K562 (cell line): ENCODE measurements at regions of chr17 and their contacts with region 1.

Region 1: DNA sequence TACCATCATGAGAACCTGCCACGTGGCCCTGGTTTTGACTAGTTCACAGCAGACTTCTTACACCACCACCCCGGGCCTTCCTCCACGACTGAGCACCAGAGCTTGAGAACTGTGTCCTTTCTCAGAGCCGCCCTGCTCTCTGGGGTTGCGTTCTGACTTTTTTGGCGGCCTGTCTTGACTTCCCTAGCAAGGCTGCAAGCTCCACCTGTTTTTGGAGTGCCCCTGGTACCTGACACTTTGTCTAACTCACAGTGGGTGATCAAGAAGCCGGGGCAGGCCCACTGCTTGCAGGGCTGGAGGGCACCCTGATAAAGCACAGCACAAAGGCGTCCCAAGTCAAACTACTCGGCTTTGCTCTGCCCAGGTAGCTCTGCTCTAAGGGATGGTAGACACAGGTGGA is 154.3 kb downstream of the SDK2 start:
- DNase-seq: no peak
- ATAC-seq: no peak
- H3K4me3 ChIP-seq: no peak overlapping the region
- H3K27ac ChIP-seq: no peak overlapping the region
- H3K4me1 ChIP-seq: no peaks in the 10 kb centered on the region
- H3K27me3 ChIP-seq: peaks cover 11 to 55% of the 10 kb centered on the region in 2 experiments; a peak in 3 of 5 replicates
- CTCF ChIP-seq: no peak
- EP300 ChIP-seq: no peak
- POLR2A ChIP-seq: no peak
- RAD21 ChIP-seq: no peak

Region 2: DNA sequence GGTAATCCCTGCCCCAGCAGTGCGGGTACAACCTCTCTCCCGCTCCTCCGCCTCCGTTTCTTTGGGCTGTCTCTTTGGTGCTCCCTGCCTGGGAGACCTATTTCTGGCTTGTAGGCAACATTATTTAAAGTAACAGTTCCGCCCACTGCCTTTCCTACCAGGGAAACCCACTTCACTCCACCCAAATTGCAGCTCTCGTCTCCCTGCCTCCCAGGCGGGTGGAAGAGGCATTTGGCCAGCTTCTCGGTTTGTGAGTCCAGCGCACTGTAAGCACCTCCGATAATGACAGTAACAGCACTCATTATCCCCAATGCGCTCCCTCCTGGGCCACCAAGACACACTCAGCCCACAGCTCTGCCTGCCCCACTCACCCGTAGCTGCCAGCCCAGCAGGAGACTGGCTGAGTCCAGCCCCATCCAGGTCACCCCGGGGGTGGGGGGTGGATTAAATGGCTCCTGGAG is 13.1 kb before region 1 on chr17:
- CTCF ChIA-PET with region 1: no interaction called
- POLR2A ChIA-PET with region 1: interaction called, 9 read pairs
- in situ Hi-C with region 1: no loop called
- intact Hi-C with region 1: loop called (anchors 2 kb)
- DNase-seq: no peak
- ATAC-seq: no peak
- H3K4me3 ChIP-seq: no peak overlapping the region
- H3K27ac ChIP-seq: no peak overlapping the region
- H3K4me1 ChIP-seq: peaks cover 7 to 10% of the 10 kb centered on the region in 2 experiments; a peak in 4 of 5 replicates
- H3K27me3 ChIP-seq: peaks cover 13 to 28% of the 10 kb centered on the region in 2 experiments
- CTCF ChIP-seq: no peak
- EP300 ChIP-seq: no peak
- POLR2A ChIP-seq: no peak
- RAD21 ChIP-seq: no peak

Region 3: GRCh38 chr17:73683771-73684170 is 193.8 kb after region 1 on chr17:
- CTCF ChIA-PET with region 1: no interaction called
- POLR2A ChIA-PET with region 1: no interaction called
- in situ Hi-C with region 1: no loop called
- intact Hi-C with region 1: no loop called
- DNase-seq: no peak
- ATAC-seq: no peak
- H3K4me3 ChIP-seq: no peak overlapping the region
- H3K27ac ChIP-seq: no peak overlapping the region
- H3K4me1 ChIP-seq: no peaks in the 10 kb centered on the region
- H3K27me3 ChIP-seq: no peaks in the 10 kb centered on the region
- CTCF ChIP-seq: no peak
- EP300 ChIP-seq: no peak
- POLR2A ChIP-seq: no peak
- RAD21 ChIP-seq: no peak

Region 4: DNA sequence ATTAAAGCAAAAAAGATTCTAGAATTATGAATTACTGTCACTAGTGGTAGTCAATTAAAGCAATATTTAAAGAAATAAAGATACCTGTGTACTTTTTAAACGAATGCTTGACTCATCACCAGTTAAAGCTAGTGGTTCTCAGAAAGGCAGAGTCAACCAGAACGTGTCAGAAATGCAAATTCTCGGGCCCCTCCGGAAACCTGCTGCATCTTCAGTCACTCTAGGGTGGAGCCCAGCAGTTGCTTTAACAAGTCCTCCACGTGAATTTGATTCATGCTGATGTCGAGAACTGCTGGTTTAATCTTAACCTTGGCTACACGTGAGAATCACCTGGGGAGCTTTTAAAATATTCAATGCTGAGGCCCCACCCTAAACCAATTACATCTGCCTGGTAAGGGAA is 324.1 kb after region 1 on chr17:
- CTCF ChIA-PET with region 1: no interaction called
- POLR2A ChIA-PET with region 1: no interaction called
- in situ Hi-C with region 1: no loop called
- intact Hi-C with region 1: no loop called
- DNase-seq: no peak
- ATAC-seq: no peak
- H3K4me3 ChIP-seq: no peak overlapping the region
- H3K27ac ChIP-seq: no peak overlapping the region
- H3K4me1 ChIP-seq: no peaks in the 10 kb centered on the region
- H3K27me3 ChIP-seq: no peaks in the 10 kb centered on the region
- CTCF ChIP-seq: no peak
- EP300 ChIP-seq: no peak
- POLR2A ChIP-seq: no peak
- RAD21 ChIP-seq: no peak

Region 5: GRCh38 chr17:73957564-73957963 is 467.6 kb after region 1 on chr17:
- CTCF ChIA-PET with region 1: no interaction called
- POLR2A ChIA-PET with region 1: no interaction called
- in situ Hi-C with region 1: no loop called
- intact Hi-C with region 1: no loop called
- DNase-seq: no peak
- ATAC-seq: no peak
- H3K4me3 ChIP-seq: no peak overlapping the region
- H3K27ac ChIP-seq: no peak overlapping the region
- H3K4me1 ChIP-seq: peaks cover 0 to 7% of the 10 kb centered on the region in 2 experiments; a peak in 1 of 5 replicates
- H3K27me3 ChIP-seq: no peaks in the 10 kb centered on the region
- CTCF ChIP-seq: no peak
- EP300 ChIP-seq: no peak
- POLR2A ChIP-seq: no peak
- RAD21 ChIP-seq: no peak